Psoas muscle (tissue), 8 donors: ENCODE measurements at regions of chr22 and their contacts with region 1.

Region 1: GRCh38 chr22:46006379-46007002 is 29.5 kb upstream of the WNT7B start:
- DNase-seq: peak; percentile 96 to 98
- ATAC-seq: peak; percentile 78 to 89 (median 82)
- H3K4me3 ChIP-seq: peak overlapping the region; percentile 23
- H3K27ac ChIP-seq: peak overlapping the region; percentile 84
- H3K4me1 ChIP-seq: peaks cover 26% of the 10 kb centered on the region
- H3K27me3 ChIP-seq: no peaks in the 10 kb centered on the region
- CTCF ChIP-seq: peak; percentile 99

Region 2: DNA sequence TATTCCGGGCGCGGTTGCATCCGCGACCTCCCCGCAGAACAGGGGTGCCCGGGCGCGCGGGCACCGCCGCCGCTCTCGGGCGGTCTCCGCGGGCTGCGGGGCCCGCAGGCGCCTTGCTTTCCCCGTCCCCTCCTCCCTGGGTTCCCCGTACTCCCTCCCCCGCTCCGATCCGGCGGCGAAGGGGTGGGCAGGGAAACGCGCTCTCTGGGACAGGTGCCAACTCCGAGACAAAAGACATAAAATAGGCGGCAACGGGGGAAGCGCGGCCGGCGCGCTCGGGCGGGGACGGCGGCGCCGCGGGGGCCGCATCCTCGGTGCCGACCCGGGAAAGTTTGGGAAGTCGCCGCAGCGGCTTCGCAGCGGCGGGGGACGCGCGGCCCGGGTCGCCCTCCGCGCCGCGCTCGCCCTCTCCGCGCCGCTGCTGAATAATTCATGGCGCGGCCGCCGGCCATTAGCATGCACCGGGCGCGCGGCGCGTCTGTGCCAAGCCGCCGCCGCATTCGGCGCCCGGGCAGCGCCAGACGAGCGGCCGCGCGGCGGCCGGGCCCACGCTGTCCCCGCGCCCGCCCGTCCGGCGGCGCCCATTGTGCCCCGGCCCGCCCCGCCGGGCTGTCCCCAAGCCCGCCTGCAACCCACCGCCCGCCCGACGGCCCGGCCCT is 65.1 kb after region 1 on chr22:
- intact Hi-C with region 1: loop called in 1 of 2 experiments (anchors 5 kb)
- DNase-seq: peak; percentile 93 to 97
- ATAC-seq: peak; percentile 30 to 48 (median 36)
- H3K4me3 ChIP-seq: peak overlapping the region; percentile 95
- H3K27ac ChIP-seq: peak overlapping the region; percentile 98
- H3K4me1 ChIP-seq: peaks cover 25% of the 10 kb centered on the region
- H3K27me3 ChIP-seq: no peaks in the 10 kb centered on the region
- CTCF ChIP-seq: no peak

Region 3: DNA sequence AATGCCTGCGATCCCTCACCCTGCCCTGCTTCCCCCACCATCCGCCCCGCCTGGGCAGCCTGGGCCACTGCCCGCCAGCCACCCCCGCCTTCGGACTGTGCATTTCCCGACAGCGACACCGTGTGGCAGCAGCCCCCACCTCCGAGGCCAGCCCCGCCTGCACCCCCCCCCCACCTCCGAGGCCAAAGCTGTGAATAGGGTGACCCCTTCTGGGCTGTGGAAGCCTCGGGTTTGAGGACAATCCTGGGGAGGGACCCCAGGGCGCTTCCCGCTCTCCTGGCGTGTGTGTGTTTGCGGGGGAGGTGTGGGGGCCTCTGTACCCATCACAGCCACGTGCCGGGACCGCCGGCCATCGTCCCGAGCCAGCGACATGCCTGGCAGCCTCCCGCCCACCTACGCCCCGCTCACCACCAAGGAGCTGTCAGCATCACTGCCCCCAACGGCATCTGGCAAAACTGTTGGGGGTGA is 110.0 kb after region 1 on chr22:
- intact Hi-C with region 1: loop called (anchors 1 to 2 kb)
- DNase-seq: peak; percentile 96 to 98
- ATAC-seq: peak; percentile 76 to 84 (median 83)
- H3K4me3 ChIP-seq: no peak overlapping the region
- H3K27ac ChIP-seq: peak overlapping the region; percentile 76
- H3K4me1 ChIP-seq: peaks cover 37% of the 10 kb centered on the region
- H3K27me3 ChIP-seq: no peaks in the 10 kb centered on the region
- CTCF ChIP-seq: peak; percentile 63

Region 4: GRCh38 chr22:46317646-46318045 is 311.2 kb after region 1 on chr22:
- intact Hi-C with region 1: loop called in 1 of 2 experiments (anchors 5 kb)
- DNase-seq: peak in 1 of 2 donors; percentile 30
- ATAC-seq: no peak
- H3K4me3 ChIP-seq: no peak overlapping the region
- H3K27ac ChIP-seq: no peak overlapping the region
- H3K4me1 ChIP-seq: no peaks in the 10 kb centered on the region
- H3K27me3 ChIP-seq: no peaks in the 10 kb centered on the region
- CTCF ChIP-seq: no peak